ENCODE measurements at regions of chr16 and their contacts with region 1.

Region 1: DNA sequence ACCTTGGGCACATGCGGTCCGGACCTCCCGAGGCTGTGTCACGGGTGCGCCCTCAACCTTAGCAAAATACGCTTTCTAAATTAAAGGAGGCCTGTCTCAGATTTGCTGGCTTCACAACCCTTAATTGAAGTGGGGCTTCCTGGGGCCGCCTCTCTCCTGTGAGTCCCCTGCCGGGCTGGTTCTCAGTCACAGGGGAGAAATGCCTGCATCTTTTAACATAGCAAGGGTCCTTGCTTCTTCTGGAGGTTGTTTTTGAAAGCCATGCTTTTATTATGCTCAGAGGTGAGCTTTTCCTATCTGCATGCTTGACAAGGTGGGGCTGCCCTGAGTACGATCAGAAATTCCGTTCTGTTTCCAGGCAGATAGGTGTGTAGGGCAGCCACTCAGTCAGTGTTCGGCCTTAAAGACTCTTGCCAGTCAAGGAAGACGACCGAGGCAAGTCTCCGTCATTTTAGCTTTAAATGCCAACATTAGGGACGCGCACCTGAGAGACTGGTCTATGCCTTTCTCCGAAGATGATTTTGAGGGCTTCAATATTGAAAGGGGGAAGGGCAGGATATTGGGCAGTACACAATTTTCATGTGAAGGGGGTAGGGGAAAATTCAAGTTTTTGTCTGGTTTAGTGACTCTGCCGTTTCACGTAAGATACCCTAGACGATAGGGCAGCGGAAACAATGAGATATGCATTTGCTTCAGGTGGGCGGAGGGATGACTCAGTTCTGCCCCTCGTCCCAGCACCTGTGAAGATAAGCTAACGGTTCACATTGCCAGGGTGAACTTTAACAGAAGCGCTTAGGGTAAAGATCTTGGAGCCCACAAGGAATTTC is 5.5 kb upstream of the SLC7A5 start:
- DNase-seq: peak in 1 of 5 donors; percentile 68
- H3K4me3 ChIP-seq: no peak overlapping the region
- H3K4me3 Mint-ChIP-seq: peak overlapping the region in 6 of 7 donors; percentile 28 to 81 (median 38)
- H3K27ac ChIP-seq: no peak overlapping the region
- H3K27ac Mint-ChIP-seq: peak overlapping the region in 6 of 8 donors; percentile 5 to 84 (median 50)
- H3K4me1 ChIP-seq: peaks cover 12% of the 10 kb centered on the region
- H3K4me1 Mint-ChIP-seq: peaks cover 15 to 21% (median 19%) of the 10 kb centered on the region in 3 donors
- H3K27me3 ChIP-seq: no peaks in the 10 kb centered on the region
- H3K27me3 Mint-ChIP-seq: peaks cover 2 to 7% of the 10 kb centered on the region in 2 donors

Region 2: GRCh38 chr16:87765776-87766484 is 108.9 kb before region 1 on chr16 and contains the start of gene KLHDC4:
- CTCF ChIA-PET with region 1: interaction called, 14 read pairs
- POLR2A ChIA-PET with region 1: interaction called, 7 read pairs
- DNase-seq: peak; percentile 84 to 92 (median 86)
- H3K4me3 ChIP-seq: peak within 1 kb of the TSS; percentile 89
- H3K4me3 Mint-ChIP-seq: peak within 1 kb of the TSS; percentile 95 to 100 (median 96)
- H3K27ac ChIP-seq: peak within 1 kb of the TSS; percentile 93
- H3K27ac Mint-ChIP-seq: peak within 1 kb of the TSS; percentile 95 to 100 (median 99)
- H3K4me1 ChIP-seq: peaks cover 43% of the 10 kb centered on the region
- H3K4me1 Mint-ChIP-seq: peaks cover 46 to 51% (median 51%) of the 10 kb centered on the region in 3 donors
- H3K27me3 ChIP-seq: no peaks in the 10 kb centered on the region
- H3K27me3 Mint-ChIP-seq: peaks cover 0 to 2% of the 10 kb centered on the region in 2 donors
- total RNA-seq, gene KLHDC4: 71.5 to 77.3 TPM

Region 3: DNA sequence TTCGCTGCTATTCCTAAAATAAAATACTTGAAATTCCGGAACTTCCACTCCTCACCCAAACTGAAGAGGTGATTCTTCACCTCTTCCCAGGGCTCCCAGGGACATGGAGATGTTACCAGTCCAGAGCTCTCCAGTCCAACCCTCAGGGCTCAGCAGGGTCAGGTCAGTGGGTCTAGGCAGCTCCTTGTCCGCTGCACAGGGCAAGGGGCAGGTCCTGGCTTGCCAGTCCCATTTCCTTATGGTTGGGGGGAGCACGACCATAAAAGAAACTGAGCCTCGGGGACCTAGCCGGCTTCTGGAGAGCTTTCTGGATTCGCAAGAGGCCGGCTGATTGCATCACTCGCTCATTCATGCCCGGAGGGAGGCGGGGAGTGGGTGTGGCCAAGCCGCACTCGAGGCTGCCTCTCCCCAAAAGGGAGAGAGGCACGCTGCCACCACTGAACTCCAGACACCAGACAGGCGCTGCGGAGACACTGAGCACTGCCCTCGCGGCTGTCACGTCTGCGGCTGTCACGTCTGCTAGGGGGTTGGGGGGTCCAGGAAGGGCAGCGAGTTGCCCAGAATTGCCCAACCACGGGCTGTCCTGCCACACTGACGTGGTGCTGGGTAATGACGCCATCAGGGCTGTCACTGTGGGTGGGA is 21.3 kb before region 1 on chr16:
- CTCF ChIA-PET with region 1: interaction called, 298 read pairs
- POLR2A ChIA-PET with region 1: interaction called, 10 read pairs
- DNase-seq: peak; percentile 66 to 91 (median 86)
- H3K4me3 ChIP-seq: peak overlapping the region; percentile 46
- H3K4me3 Mint-ChIP-seq: peak overlapping the region; percentile 57 to 87 (median 68)
- H3K27ac ChIP-seq: peak overlapping the region; percentile 82
- H3K27ac Mint-ChIP-seq: peak overlapping the region; percentile 70 to 99 (median 90)
- H3K4me1 ChIP-seq: peaks cover 53% of the 10 kb centered on the region
- H3K4me1 Mint-ChIP-seq: peaks cover 41 to 64% (median 46%) of the 10 kb centered on the region in 3 donors
- H3K27me3 ChIP-seq: no peaks in the 10 kb centered on the region
- H3K27me3 Mint-ChIP-seq: peaks cover 0 to 1% of the 10 kb centered on the region in 2 donors

Region 4: GRCh38 chr16:87895641-87896141 is 20.8 kb after region 1 on chr16:
- CTCF ChIA-PET with region 1: interaction called, 21 read pairs
- POLR2A ChIA-PET with region 1: no interaction called
- DNase-seq: peak; percentile 9 to 89 (median 39)
- H3K4me3 ChIP-seq: no peak overlapping the region
- H3K4me3 Mint-ChIP-seq: peak overlapping the region; percentile 54 to 80 (median 65)
- H3K27ac ChIP-seq: no peak overlapping the region
- H3K27ac Mint-ChIP-seq: peak overlapping the region; percentile 48 to 98 (median 92)
- H3K4me1 ChIP-seq: peaks cover 34% of the 10 kb centered on the region
- H3K4me1 Mint-ChIP-seq: peaks cover 31 to 41% (median 33%) of the 10 kb centered on the region in 3 donors
- H3K27me3 ChIP-seq: no peaks in the 10 kb centered on the region
- H3K27me3 Mint-ChIP-seq: no peaks in the 10 kb centered on the region

Region 5: GRCh38 chr16:88069397-88070168 is 194.7 kb after region 1 on chr16:
- CTCF ChIA-PET with region 1: no interaction called
- POLR2A ChIA-PET with region 1: no interaction called
- DNase-seq: no peak
- H3K4me3 ChIP-seq: no peak overlapping the region
- H3K4me3 Mint-ChIP-seq: no peak overlapping the region
- H3K27ac ChIP-seq: no peak overlapping the region
- H3K27ac Mint-ChIP-seq: peak overlapping the region in 4 of 8 donors; percentile 3 to 51 (median 20)
- H3K4me1 ChIP-seq: no peaks in the 10 kb centered on the region
- H3K4me1 Mint-ChIP-seq: peaks cover 0 to 6% (median 0%) of the 10 kb centered on the region in 3 donors
- H3K27me3 ChIP-seq: no peaks in the 10 kb centered on the region
- H3K27me3 Mint-ChIP-seq: peaks cover 0 to 2% of the 10 kb centered on the region in 2 donors

Measured in CD8-positive, alpha-beta memory T cell (primary cell).